ENCODE measurements at regions of chr15 and their contacts with region 1.

Region 1: GRCh38 chr15:63805993-63806980 is 27.5 kb downstream of the HERC1 start:
- DNase-seq: peak in 5 of 9 donors; percentile 17 to 36 (median 21)
- ATAC-seq: peak; percentile 61
- H3K4me3 ChIP-seq: no peak overlapping the region
- H3K4me3 Mint-ChIP-seq: peak overlapping the region; percentile 4 to 74 (median 62)
- H3K27ac ChIP-seq: peak overlapping the region; percentile 51
- H3K27ac Mint-ChIP-seq: peak overlapping the region; percentile 61 to 92 (median 81)
- H3K4me1 ChIP-seq: peaks cover 13 to 46% of the 10 kb centered on the region in 2 donors
- H3K4me1 Mint-ChIP-seq: peaks cover 60 to 99% (median 95%) of the 10 kb centered on the region in 7 donors
- H3K27me3 ChIP-seq: no peaks in the 10 kb centered on the region
- H3K27me3 Mint-ChIP-seq: no peaks in the 10 kb centered on the region

Region 2: GRCh38 chr15:63763476-63764123 is 42.7 kb before region 1 on chr15:
- CTCF ChIA-PET with region 1: no interaction called
- POLR2A ChIA-PET with region 1: no interaction called
- intact Hi-C with region 1: loop called (anchors 5 kb)
- DNase-seq: no peak
- ATAC-seq: peak; percentile 73
- H3K4me3 ChIP-seq: no peak overlapping the region
- H3K4me3 Mint-ChIP-seq: peak overlapping the region in 4 of 10 donors; percentile 32 to 54 (median 44)
- H3K27ac ChIP-seq: no peak overlapping the region
- H3K27ac Mint-ChIP-seq: peak overlapping the region in 4 of 9 donors; percentile 38 to 89 (median 65)
- H3K4me1 ChIP-seq: peaks cover 21 to 24% of the 10 kb centered on the region in 2 donors
- H3K4me1 Mint-ChIP-seq: peaks cover 42 to 81% (median 71%) of the 10 kb centered on the region in 7 donors
- H3K27me3 ChIP-seq: no peaks in the 10 kb centered on the region
- H3K27me3 Mint-ChIP-seq: no peaks in the 10 kb centered on the region